ENCODE measurements at regions of chr18 and their contacts with region 1.

Region 1: DNA sequence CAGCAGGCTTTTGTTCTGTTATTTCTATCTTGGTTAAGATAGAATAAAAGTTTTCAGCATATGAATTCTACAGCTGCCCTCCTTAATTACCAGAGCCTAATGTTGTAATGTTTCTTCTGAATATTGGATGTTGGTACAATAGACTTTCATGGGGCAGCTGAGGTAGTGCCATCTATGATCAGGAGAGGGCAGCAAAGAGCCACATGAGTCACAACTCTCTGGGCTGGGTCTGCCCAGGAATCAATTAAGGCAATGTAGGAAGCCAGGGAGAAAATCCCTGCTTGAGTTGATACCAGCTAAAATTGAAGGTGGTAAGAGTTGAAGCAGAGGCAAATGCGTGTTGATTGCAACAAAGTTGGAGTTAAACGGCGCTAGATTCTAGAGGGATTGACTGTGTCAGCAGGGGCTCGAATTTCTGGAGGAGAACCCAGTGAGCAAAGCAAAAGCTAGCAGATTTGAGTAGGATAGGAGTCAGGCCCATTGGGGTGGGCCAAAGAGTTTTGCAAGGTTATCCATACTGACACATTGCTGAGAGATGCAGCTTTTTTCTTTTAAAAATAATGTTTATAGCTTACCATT is 10.6 kb upstream of the MC5R start:
- DNase-seq: peak; percentile 74
- H3K4me3 Mint-ChIP-seq: no peak overlapping the region
- H3K27ac Mint-ChIP-seq: no peak overlapping the region
- H3K4me1 Mint-ChIP-seq: peaks cover 6% of the 10 kb centered on the region
- H3K27me3 Mint-ChIP-seq: no peaks in the 10 kb centered on the region
- CTCF ChIP-seq: peak; percentile 85

Region 2: GRCh38 chr18:13558124-13558523 is 255.2 kb before region 1 on chr18:
- CTCF ChIA-PET with region 1: interaction called, 30 read pairs
- POLR2A ChIA-PET with region 1: no interaction called
- intact Hi-C with region 1: loop called (anchors 5 kb)
- DNase-seq: peak; percentile 48
- H3K4me3 Mint-ChIP-seq: no peak overlapping the region
- H3K27ac Mint-ChIP-seq: no peak overlapping the region
- H3K4me1 Mint-ChIP-seq: no peaks in the 10 kb centered on the region
- H3K27me3 Mint-ChIP-seq: peaks cover 30% of the 10 kb centered on the region
- CTCF ChIP-seq: peak; percentile 51

Region 3: DNA sequence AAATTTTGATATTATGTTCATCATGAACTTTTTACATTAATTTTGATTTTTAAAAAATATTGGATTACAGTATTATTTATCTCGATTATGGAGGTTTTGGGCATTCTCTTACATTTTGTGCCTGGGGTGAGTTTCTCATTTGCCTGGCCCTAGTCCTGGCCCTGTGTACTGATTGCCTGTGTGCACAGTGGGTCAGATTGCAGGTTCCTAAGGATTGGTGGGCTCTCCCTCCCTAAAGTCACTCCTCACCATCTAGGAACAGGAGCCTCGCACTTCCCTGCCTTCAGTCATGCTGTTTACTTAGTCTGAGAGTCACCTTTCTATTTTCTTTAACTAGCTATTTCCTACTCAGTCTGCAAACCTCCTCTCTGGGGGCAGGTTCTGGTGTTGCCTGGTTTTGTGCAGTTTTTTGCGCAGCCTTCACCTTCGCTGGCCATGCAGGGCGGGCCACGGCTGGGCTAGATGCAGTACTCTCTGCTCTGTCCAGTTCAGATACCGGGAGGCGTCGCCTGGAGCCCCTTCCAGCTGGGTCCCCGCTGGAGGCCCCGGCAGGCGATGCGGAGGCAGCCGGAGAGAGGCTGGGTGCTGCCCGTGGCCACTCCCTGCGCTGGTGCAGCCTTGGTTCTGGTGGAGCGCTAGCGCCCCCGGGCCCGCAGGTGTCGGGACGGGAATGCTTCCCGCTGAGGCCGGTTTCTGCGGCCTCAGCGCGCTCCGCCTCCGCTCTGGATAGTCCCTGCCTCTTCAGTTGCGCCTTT is 12.7 kb before region 1 on chr18:
- CTCF ChIA-PET with region 1: interaction called, 44 read pairs
- POLR2A ChIA-PET with region 1: no interaction called
- intact Hi-C with region 1: no loop called
- DNase-seq: peak; percentile 52
- H3K4me3 Mint-ChIP-seq: no peak overlapping the region
- H3K27ac Mint-ChIP-seq: no peak overlapping the region
- H3K4me1 Mint-ChIP-seq: peaks cover 14% of the 10 kb centered on the region
- H3K27me3 Mint-ChIP-seq: no peaks in the 10 kb centered on the region
- CTCF ChIP-seq: peak; percentile 45

Region 4: GRCh38 chr18:13823707-13824395 is 10.5 kb after region 1 on chr18 and contains the start of gene MC5R:
- CTCF ChIA-PET with region 1: interaction called, 39 read pairs
- POLR2A ChIA-PET with region 1: no interaction called
- intact Hi-C with region 1: no loop called
- DNase-seq: peak; percentile 47
- H3K4me3 Mint-ChIP-seq: peak within 1 kb of the TSS; percentile 38
- H3K27ac Mint-ChIP-seq: no peak within 1 kb of the TSS
- H3K4me1 Mint-ChIP-seq: peaks cover 9% of the 10 kb centered on the region
- H3K27me3 Mint-ChIP-seq: peaks cover 28% of the 10 kb centered on the region
- CTCF ChIP-seq: peak; percentile 90
- total RNA-seq, gene MC5R: not detected in 2 replicates

Region 5: DNA sequence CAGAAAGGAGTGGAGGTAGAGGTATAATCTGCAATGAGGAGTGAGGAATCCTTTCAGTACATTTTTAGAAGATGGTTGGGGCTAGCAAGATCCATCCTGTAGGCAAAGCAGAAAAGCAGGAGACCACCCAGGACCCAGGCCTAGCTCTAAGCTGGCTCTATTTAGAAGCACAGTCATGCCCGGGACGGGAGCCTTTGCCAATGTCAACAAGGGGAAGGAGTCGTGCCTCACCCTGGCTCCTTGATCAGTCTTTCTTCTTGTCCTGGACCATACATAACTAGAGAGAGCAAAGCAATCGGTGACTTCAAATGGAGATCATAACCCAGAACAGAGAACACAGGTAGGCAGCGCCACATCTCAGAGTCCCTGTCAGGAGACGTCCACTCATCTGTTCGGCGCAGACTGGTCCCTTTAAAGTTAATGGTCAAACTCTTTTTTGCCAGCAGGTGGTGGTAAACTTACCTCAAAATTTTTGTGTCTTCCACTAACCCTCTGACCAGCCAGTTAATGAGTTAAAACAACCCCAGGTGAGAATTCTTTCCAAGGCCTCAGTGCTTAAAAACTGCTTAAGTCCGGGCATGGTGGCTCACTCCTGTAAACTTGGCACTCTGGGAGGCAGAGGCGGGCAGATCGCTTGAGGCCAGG is 18.6 kb after region 1 on chr18:
- CTCF ChIA-PET with region 1: interaction called, 26 read pairs
- POLR2A ChIA-PET with region 1: no interaction called
- intact Hi-C with region 1: no loop called
- DNase-seq: peak; percentile 50
- H3K4me3 Mint-ChIP-seq: no peak overlapping the region
- H3K27ac Mint-ChIP-seq: no peak overlapping the region
- H3K4me1 Mint-ChIP-seq: no peaks in the 10 kb centered on the region
- H3K27me3 Mint-ChIP-seq: peaks cover 33% of the 10 kb centered on the region
- CTCF ChIP-seq: no peak

Region 6: GRCh38 chr18:14086458-14087231 is 273.3 kb after region 1 on chr18:
- CTCF ChIA-PET with region 1: interaction called, 124 read pairs
- POLR2A ChIA-PET with region 1: no interaction called
- intact Hi-C with region 1: loop called (anchors 5 kb)
- DNase-seq: peak; percentile 46
- H3K4me3 Mint-ChIP-seq: no peak overlapping the region
- H3K27ac Mint-ChIP-seq: no peak overlapping the region
- H3K4me1 Mint-ChIP-seq: no peaks in the 10 kb centered on the region
- H3K27me3 Mint-ChIP-seq: no peaks in the 10 kb centered on the region
- CTCF ChIP-seq: peak; percentile 70

Region 7: GRCh38 chr18:14093307-14093915 is 280.1 kb after region 1 on chr18:
- CTCF ChIA-PET with region 1: interaction called, 124 read pairs
- POLR2A ChIA-PET with region 1: no interaction called
- intact Hi-C with region 1: loop called (anchors 5 kb)
- DNase-seq: no peak
- H3K4me3 Mint-ChIP-seq: no peak overlapping the region
- H3K27ac Mint-ChIP-seq: no peak overlapping the region
- H3K4me1 Mint-ChIP-seq: no peaks in the 10 kb centered on the region
- H3K27me3 Mint-ChIP-seq: no peaks in the 10 kb centered on the region
- CTCF ChIP-seq: no peak